Transverse colon (tissue), 4 donors: ENCODE measurements at regions of chr18 and their contacts with region 1.

Region 1: DNA sequence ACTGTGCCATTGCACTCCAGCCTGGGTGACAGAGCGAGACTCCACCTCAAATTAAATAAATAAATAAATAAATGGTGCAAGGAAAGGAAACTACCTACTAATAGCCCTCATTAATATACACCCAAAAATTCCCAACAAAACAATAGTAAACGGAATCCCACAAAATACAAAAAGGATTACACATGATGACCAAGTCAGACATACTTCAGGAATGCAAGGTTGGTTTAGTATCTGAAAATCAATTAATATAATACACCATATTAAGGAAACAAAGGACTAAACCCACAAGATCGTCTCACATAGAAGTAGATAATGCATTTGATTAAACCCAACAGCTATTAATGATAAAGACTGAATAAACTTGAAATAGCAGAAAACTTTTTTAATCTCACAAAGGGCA is 307.4 kb downstream of the TGIF1 start:
- DNase-seq: no peak
- H3K4me3 ChIP-seq: no peak overlapping the region
- H3K27ac ChIP-seq: no peak overlapping the region
- H3K4me1 ChIP-seq: no peaks in the 10 kb centered on the region
- H3K27me3 ChIP-seq: no peaks in the 10 kb centered on the region
- CTCF ChIP-seq: no peak
- EP300 ChIP-seq: no peak
- POLR2A ChIP-seq: no peak

Region 2: DNA sequence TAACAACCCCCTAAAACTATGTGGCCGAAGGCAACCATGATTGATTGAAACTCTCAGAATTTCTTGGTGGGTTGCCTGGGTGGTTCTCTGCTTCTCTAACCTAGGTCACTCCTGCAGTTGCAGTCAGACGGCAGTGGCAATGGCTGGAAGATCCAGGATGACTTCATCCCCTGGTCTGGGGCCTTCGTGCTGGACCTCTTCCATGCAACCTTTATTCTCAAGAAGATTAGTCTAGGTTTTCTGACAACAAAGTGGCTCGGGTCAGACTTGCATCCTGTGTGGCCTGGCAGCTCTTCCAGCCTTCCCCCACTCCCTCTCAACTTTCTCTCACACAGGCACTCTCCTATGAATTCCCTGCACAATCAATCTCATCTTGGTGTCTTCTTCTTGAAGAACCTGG is 1262.4 kb before region 1 on chr18:
- in situ Hi-C with region 1: no loop called
- intact Hi-C with region 1: no loop called
- DNase-seq: no peak
- H3K4me3 ChIP-seq: no peak overlapping the region
- H3K27ac ChIP-seq: no peak overlapping the region
- H3K4me1 ChIP-seq: no peaks in the 10 kb centered on the region
- H3K27me3 ChIP-seq: no peaks in the 10 kb centered on the region
- CTCF ChIP-seq: no peak
- EP300 ChIP-seq: no peak
- POLR2A ChIP-seq: no peak

Region 3: DNA sequence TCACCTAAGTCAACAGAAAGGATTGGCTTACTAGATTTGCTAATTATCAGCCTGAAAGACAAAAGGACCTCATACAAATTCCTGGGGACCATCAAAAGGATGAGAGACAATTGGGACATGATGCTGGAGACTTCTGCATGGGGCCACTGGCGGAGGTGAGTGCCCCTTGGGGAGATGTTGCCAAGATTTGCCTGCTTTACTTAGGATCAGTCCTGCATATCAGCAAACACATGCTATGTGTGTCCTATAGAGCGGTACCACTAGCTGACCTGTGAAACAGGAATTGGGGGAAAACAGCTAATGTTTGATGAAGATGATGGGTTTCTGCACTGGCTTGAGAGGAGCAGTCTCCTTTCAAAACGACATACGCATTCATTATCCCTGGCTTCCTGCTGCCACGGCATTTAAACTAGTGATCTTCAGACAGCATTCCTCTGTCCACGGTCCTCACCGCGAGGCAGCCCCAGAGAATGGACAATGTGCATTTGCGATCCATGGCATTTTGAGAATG is 203.2 kb before region 1 on chr18:
- in situ Hi-C with region 1: no loop called
- intact Hi-C with region 1: no loop called
- DNase-seq: no peak
- H3K4me3 ChIP-seq: no peak overlapping the region
- H3K27ac ChIP-seq: no peak overlapping the region
- H3K4me1 ChIP-seq: peaks cover 0 to 13% (median 0%) of the 10 kb centered on the region in 4 donors
- H3K27me3 ChIP-seq: no peaks in the 10 kb centered on the region
- CTCF ChIP-seq: no peak
- EP300 ChIP-seq: no peak
- POLR2A ChIP-seq: no peak

Region 4: DNA sequence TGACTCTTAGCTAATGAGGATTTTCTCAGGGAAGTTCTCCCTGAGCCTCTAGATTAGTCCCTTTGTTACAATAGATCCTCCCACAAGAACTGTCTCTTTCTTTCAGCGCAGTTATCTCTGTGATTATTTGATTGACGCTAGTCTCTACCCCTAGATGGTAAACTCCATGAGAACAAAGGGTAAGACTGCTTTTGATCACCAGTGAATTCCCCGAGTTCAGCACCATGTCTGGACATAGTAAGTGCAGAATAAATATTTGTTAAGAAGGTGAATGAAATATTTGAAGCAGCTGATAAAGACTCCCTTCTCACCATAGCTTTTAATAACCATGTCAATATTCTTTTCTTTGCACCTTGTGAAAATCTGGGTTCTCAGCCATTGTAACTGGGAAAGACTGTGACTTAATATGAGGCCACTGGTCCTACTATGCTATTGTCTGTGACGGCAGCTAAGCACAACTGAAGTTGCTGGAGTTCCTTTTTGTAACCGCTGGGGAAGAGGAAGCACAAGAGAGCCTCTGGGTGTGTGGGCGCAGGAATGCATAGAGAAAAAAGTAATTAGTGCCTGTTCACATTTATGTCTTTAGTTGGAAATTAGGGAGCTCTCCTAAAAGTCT is 92.7 kb before region 1 on chr18:
- in situ Hi-C with region 1: no loop called
- intact Hi-C with region 1: no loop called
- DNase-seq: no peak
- H3K4me3 ChIP-seq: no peak overlapping the region
- H3K27ac ChIP-seq: peak overlapping the region in 2 of 4 donors; percentile 83 to 84
- H3K4me1 ChIP-seq: peaks cover 0 to 22% (median 9%) of the 10 kb centered on the region in 4 donors
- H3K27me3 ChIP-seq: no peaks in the 10 kb centered on the region
- CTCF ChIP-seq: no peak
- EP300 ChIP-seq: no peak
- POLR2A ChIP-seq: no peak

Region 5: GRCh38 chr18:3726238-3726951 is 31.0 kb before region 1 on chr18:
- in situ Hi-C with region 1: no loop called
- intact Hi-C with region 1: loop called (anchors 1 kb)
- DNase-seq: no peak
- H3K4me3 ChIP-seq: no peak overlapping the region
- H3K27ac ChIP-seq: peak overlapping the region in 2 of 4 donors; percentile 13 to 20
- H3K4me1 ChIP-seq: peaks cover 0 to 42% (median 21%) of the 10 kb centered on the region in 4 donors
- H3K27me3 ChIP-seq: no peaks in the 10 kb centered on the region
- CTCF ChIP-seq: no peak
- EP300 ChIP-seq: no peak
- POLR2A ChIP-seq: no peak